ENCODE measurements at regions of chr9 and their contacts with region 1.

Region 1: GRCh38 chr9:5886114-5886939 is 4.4 kb upstream of the MLANA start:
- DNase-seq: peak; percentile 66
- H3K4me3 Mint-ChIP-seq: no peak overlapping the region
- H3K27ac Mint-ChIP-seq: peak overlapping the region; percentile 52
- H3K4me1 Mint-ChIP-seq: peaks cover 11% of the 10 kb centered on the region
- H3K27me3 Mint-ChIP-seq: no peaks in the 10 kb centered on the region

Region 2: DNA sequence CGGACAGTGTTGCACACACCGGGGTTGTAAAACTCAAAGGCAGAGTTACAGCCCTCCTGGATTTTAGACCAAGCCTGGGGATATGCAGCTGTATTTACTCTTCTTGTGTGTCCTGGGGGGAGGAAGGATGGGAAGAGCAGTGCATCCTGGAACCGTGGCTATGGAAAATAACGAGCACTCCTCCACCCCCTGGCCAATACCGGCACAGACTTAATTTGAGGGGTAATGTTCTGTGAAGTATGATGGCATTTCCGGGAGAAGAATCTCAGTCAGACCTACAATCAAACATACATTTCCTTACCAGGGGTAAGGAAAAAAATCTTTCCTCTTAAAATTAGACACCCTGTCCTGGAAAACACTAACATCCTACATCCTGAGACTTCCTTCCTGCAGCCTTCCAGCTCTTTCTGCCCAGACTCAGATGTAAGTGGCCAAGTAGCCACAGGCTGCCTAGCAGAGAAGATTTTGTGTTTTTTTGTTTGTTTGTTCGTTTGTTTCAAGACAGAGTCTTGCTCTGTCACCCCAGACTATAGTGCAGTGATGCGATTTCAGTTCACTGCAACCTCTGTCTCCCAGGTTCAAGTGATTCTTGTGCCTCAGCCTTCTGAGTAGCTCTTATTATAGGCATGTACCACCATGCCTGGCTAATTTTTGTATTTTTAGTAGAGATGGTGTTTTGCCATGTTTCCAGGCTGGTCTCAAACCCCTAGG is 42.4 kb before region 1 on chr9:
- intact Hi-C with region 1: loop called (anchors 2 kb)
- DNase-seq: no peak
- H3K4me3 Mint-ChIP-seq: peak overlapping the region; percentile 69
- H3K27ac Mint-ChIP-seq: peak overlapping the region; percentile 88
- H3K4me1 Mint-ChIP-seq: peaks cover 88% of the 10 kb centered on the region
- H3K27me3 Mint-ChIP-seq: no peaks in the 10 kb centered on the region

Region 3: GRCh38 chr9:5976674-5977397 is 90.5 kb after region 1 on chr9:
- intact Hi-C with region 1: loop called (anchors 5 kb)
- DNase-seq: no peak
- H3K4me3 Mint-ChIP-seq: no peak overlapping the region
- H3K27ac Mint-ChIP-seq: peak overlapping the region; percentile 58
- H3K4me1 Mint-ChIP-seq: peaks cover 21% of the 10 kb centered on the region
- H3K27me3 Mint-ChIP-seq: no peaks in the 10 kb centered on the region

Region 4: DNA sequence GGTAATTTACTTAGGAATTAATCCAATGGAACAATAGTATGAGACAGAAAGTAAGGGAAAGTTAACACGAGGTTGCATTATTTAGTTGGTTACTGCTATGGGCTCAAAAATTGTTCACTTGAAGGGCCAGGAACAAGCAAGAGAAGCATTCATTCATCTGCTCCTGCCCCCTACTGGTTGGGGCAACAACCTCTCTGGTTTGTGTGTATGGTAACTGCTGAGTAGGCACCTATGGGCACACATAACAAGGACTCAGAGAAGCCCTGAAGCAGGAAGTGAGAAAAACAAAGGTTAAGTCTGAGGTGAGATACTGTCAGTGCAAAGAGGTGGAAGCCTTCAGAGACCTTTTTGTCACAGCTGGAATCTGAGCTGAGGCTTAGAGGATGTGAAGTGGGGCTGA is 163.5 kb after region 1 on chr9:
- intact Hi-C with region 1: loop called (anchors 1 kb)
- DNase-seq: peak; percentile 25
- H3K4me3 Mint-ChIP-seq: no peak overlapping the region
- H3K27ac Mint-ChIP-seq: no peak overlapping the region
- H3K4me1 Mint-ChIP-seq: peaks cover 13% of the 10 kb centered on the region
- H3K27me3 Mint-ChIP-seq: peaks cover 6% of the 10 kb centered on the region

Region 5: GRCh38 chr9:6305954-6306563 is 419.7 kb after region 1 on chr9:
- intact Hi-C with region 1: loop called (anchors 2 kb)
- DNase-seq: no peak
- H3K4me3 Mint-ChIP-seq: no peak overlapping the region
- H3K27ac Mint-ChIP-seq: no peak overlapping the region
- H3K4me1 Mint-ChIP-seq: no peaks in the 10 kb centered on the region
- H3K27me3 Mint-ChIP-seq: peaks cover 21% of the 10 kb centered on the region

Measured in activated T-helper 1 cell treated with anti-CD3 and anti-CD28 coated beads, Interleukin-12 subunit alpha, Interleukin-12 subunit beta, Interleukin-2, Interleukin-4 antibody, amounts not matched to agents 30 ng/mL and 10 ng/mL and 1 ng/mL, durations not matched to agents 14 hours and 24 hours and 36 hours (primary cell).